PC-9 (cell line): ENCODE measurements at regions of chr2 and their contacts with region 1.

Region 1: GRCh38 chr2:14634201-14634884 is 1.8 kb downstream of the LRATD1 start:
- DNase-seq: peak in 1 of 2 experiments; percentile 70
- H3K4me3 ChIP-seq: peak overlapping the region; percentile 52; the same call in 1 of the 2 replicates
- H3K27ac ChIP-seq: no peak overlapping the region
- H3K4me1 ChIP-seq: no peaks in the 10 kb centered on the region
- H3K27me3 ChIP-seq: peaks cover 18% of the 10 kb centered on the region; the same call in 1 of the 2 replicates
- CTCF ChIP-seq: peak; percentile 51

Region 2: DNA sequence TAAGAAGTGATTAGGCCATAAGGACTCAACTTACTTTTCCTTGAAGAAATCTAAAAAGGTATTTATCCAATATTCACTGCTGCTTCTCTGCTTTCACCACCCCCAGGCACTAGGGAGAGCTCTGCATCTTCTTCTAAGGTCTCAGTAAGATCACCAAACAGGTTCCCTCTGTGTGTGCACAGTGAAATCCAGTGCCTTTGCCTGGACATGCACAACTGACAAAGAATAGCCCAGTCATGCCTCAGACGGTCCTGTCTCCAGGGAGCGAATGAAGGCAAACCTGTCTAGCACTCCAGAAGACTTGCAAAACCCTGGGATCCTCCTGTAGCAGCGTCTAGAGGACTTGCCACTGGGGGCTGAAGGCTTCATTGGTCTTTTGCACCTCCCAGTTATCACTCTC is 346.3 kb before region 1 on chr2:
- CTCF ChIA-PET with region 1: no interaction called
- POLR2A ChIA-PET with region 1: no interaction called
- intact Hi-C with region 1: loop called (anchors 1 kb)
- DNase-seq: peak; percentile 60 to 76
- H3K4me3 ChIP-seq: no peak overlapping the region
- H3K27ac ChIP-seq: no peak overlapping the region
- H3K4me1 ChIP-seq: 0 out of 2 replicates have a peak, but pooled peaks cover 5% of the 10 kb centered on the region
- H3K27me3 ChIP-seq: no peaks in the 10 kb centered on the region
- CTCF ChIP-seq: no peak; the same call in 1 of the 2 replicates

Region 3: GRCh38 chr2:14445670-14446069 is 188.7 kb before region 1 on chr2:
- CTCF ChIA-PET with region 1: no interaction called
- POLR2A ChIA-PET with region 1: no interaction called
- intact Hi-C with region 1: no loop called
- DNase-seq: no peak
- H3K4me3 ChIP-seq: no peak overlapping the region
- H3K27ac ChIP-seq: no peak overlapping the region
- H3K4me1 ChIP-seq: no peaks in the 10 kb centered on the region
- H3K27me3 ChIP-seq: no peaks in the 10 kb centered on the region
- CTCF ChIP-seq: no peak

Region 4: GRCh38 chr2:14524057-14524802 is 110.1 kb before region 1 on chr2:
- CTCF ChIA-PET with region 1: no interaction called
- POLR2A ChIA-PET with region 1: interaction called, 8 read pairs
- intact Hi-C with region 1: loop called (anchors 2 kb)
- DNase-seq: peak; percentile 35 to 78
- H3K4me3 ChIP-seq: no peak overlapping the region
- H3K27ac ChIP-seq: peak overlapping the region; percentile 61
- H3K4me1 ChIP-seq: peaks cover 4% of the 10 kb centered on the region; the same call in 1 of the 2 replicates
- H3K27me3 ChIP-seq: no peaks in the 10 kb centered on the region
- CTCF ChIP-seq: no peak

Region 5: GRCh38 chr2:14778015-14778414 is 143.7 kb after region 1 on chr2:
- CTCF ChIA-PET with region 1: no interaction called
- POLR2A ChIA-PET with region 1: no interaction called
- intact Hi-C with region 1: loop called (anchors 10 kb)
- DNase-seq: peak in 1 of 2 experiments; percentile 66
- H3K4me3 ChIP-seq: no peak overlapping the region
- H3K27ac ChIP-seq: peak overlapping the region; percentile 42
- H3K4me1 ChIP-seq: peaks cover 57% of the 10 kb centered on the region
- H3K27me3 ChIP-seq: no peaks in the 10 kb centered on the region
- CTCF ChIP-seq: no peak

Region 6: GRCh38 chr2:14903709-14904374 is 269.5 kb after region 1 on chr2:
- CTCF ChIA-PET with region 1: no interaction called
- POLR2A ChIA-PET with region 1: no interaction called
- intact Hi-C with region 1: loop called (anchors 10 kb)
- DNase-seq: peak; percentile 39 to 65
- H3K4me3 ChIP-seq: no peak overlapping the region
- H3K27ac ChIP-seq: no peak overlapping the region
- H3K4me1 ChIP-seq: no peaks in the 10 kb centered on the region
- H3K27me3 ChIP-seq: no peaks in the 10 kb centered on the region
- CTCF ChIP-seq: peak; percentile 91